Activated CD8-positive, alpha-beta T cell treated with anti-CD3 and anti-CD28 coated beads for 36 hours (primary cell): ENCODE measurements at regions of chr13 and their contacts with region 1.

Region 1: GRCh38 chr13:48233046-48233907 is at the start of gene ITM2B:
- DNase-seq: peak; percentile 60
- ATAC-seq: peak; percentile 69
- H3K4me3 Mint-ChIP-seq: peak within 1 kb of the TSS; percentile 88
- H3K27ac Mint-ChIP-seq: peak within 1 kb of the TSS; percentile 95
- H3K4me1 Mint-ChIP-seq: peaks cover 53% of the 10 kb centered on the region
- H3K27me3 Mint-ChIP-seq: no peaks in the 10 kb centered on the region
- CTCF ChIP-seq: peak; percentile 61
- total RNA-seq, gene ITM2B: 85.5 to 91.2 TPM

Region 2: DNA sequence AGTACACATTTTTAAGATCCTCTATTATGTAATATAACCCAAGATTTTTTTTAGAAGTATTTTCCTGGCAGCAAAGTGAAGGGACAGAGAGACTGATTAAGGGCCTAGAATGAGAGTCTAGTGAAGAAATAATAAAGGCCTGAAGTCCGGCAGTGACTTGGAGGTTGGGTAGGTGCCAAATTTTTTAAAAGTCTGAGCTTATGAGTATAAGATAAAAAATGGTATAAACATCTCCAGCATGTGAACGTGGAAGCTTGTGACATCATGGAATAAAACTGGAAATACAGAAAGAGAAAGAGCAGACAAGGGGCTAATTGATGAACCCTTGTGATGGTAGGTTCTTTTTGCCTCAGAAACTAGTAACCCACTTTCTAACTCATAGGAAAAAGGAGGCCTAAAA is 406.8 kb before region 1 on chr13:
- CTCF ChIA-PET with region 1: no interaction called
- POLR2A ChIA-PET with region 1: no interaction called
- intact Hi-C with region 1: no loop called
- DNase-seq: no peak
- ATAC-seq: no peak
- H3K4me3 Mint-ChIP-seq: no peak overlapping the region
- H3K27ac Mint-ChIP-seq: no peak overlapping the region
- H3K4me1 Mint-ChIP-seq: no peaks in the 10 kb centered on the region
- H3K27me3 Mint-ChIP-seq: no peaks in the 10 kb centered on the region
- CTCF ChIP-seq: no peak

Region 3: DNA sequence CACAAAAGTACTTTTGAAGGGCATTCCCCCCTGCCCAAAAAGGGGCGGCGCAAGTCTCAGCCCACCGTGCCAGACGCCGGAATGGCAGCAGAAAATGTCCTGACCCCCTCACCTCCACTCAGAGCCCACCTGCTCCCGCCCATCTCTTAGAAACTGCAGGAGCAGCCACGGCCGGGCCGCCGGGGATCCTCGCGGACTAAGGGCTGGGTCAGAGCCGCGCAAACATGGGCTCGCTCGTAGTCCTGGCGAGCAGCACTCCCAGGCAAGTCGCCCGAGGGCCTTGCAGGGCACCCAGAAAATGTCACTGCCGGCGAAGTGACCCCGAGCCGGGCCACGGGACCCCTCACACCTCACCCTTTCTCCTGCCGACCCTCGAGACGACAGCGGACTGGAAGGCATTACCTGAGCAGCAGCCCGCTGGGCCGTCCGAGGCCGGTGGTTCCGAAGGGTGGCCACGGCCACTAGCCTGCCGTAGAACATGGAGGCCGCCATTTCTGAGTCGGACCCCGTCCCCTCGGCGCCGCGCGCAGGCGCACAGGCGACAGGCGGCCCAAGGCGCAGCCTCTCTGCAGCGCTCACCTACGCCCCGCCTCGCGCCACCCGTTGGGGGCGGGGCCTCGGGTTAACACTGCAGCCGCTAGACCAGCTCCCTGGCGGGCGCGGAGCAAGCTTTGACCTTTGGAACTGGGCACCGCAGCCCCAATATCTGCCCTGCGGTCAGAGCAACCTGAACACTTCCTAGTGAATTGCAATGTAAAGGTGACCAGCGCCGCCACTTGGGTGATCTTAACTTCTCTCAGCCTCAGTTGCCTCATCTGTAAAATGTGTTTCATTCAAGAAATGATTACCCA is 232.3 kb before region 1 on chr13 and contains the start of gene SUCLA2:
- CTCF ChIA-PET with region 1: no interaction called
- POLR2A ChIA-PET with region 1: no interaction called
- intact Hi-C with region 1: no loop called
- DNase-seq: peak; percentile 92
- ATAC-seq: peak; percentile 100
- H3K4me3 Mint-ChIP-seq: peak within 1 kb of the TSS; percentile 90
- H3K27ac Mint-ChIP-seq: peak within 1 kb of the TSS; percentile 88
- H3K4me1 Mint-ChIP-seq: peaks cover 30% of the 10 kb centered on the region
- H3K27me3 Mint-ChIP-seq: no peaks in the 10 kb centered on the region
- CTCF ChIP-seq: no peak
- total RNA-seq, gene SUCLA2: 42.2 to 44.7 TPM

Region 4: DNA sequence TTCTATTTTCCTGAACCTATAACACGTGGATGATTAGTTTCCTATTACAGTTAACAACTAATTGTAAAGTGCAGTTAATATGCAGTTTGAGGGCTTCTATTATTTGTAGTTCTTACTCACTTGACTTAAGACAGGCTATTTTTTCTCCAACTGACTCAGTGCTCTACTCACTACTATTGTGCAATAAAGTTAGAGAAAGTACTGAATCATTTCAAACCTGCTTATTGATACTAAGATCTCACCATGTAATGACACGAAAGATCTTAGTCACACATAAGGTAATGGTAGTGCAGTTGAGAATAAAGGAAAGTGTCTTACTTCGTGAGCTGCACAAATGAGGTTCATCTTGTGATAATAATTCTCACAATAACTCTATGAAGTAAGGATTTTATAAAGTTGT is 23.1 kb before region 1 on chr13:
- CTCF ChIA-PET with region 1: no interaction called
- POLR2A ChIA-PET with region 1: no interaction called
- intact Hi-C with region 1: no loop called
- DNase-seq: no peak
- ATAC-seq: peak; percentile 92
- H3K4me3 Mint-ChIP-seq: no peak overlapping the region
- H3K27ac Mint-ChIP-seq: no peak overlapping the region
- H3K4me1 Mint-ChIP-seq: peaks cover 18% of the 10 kb centered on the region
- H3K27me3 Mint-ChIP-seq: no peaks in the 10 kb centered on the region
- CTCF ChIP-seq: no peak

Region 5: DNA sequence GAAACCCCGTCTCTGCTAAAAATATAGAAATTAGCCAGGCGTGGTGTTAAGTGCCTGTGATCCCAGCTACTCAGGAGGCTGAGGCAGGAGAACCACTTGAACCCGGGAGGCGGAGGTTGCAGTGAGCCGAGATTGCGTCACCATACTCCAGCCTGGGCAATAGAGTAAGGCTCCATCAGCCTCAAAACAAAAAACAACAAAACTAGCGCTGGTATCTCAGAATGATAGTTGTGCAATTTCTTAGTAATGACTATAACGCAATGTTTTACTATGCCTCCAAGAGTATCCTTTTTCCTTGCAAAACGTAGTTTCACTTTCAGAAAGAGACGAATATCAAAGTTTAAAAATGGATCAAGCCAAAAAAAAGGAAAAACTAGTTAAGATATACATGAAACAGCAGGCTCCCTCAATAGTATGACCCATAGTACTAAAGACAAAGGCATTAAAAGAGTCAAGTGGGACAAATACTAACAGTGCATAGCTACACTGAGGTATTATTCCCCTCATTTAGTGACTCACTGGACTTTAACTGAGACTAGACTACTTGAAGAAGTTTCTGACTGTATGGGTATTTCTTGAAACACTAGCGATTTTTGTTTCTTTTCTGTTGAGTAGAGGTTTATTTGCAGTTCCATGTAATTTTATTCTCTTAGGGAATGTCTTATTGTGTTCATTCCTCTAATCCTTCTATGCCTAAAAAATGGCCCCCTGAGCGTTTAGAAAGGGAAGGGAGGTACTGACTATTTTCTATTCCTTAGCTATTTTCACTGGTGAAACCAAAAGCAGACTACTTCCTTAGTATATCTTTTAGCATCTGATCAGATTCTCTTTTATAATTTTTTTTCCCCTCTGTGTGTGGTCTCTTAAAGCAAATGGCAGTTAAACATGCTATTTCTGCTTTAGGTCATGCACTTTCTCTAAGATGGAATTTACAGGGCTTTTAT is 10.6 kb before region 1 on chr13:
- CTCF ChIA-PET with region 1: interaction called, 18 read pairs
- POLR2A ChIA-PET with region 1: interaction called, 24 read pairs
- intact Hi-C with region 1: no loop called
- DNase-seq: no peak
- ATAC-seq: peak; percentile 67
- H3K4me3 Mint-ChIP-seq: peak overlapping the region; percentile 61
- H3K27ac Mint-ChIP-seq: peak overlapping the region; percentile 94
- H3K4me1 Mint-ChIP-seq: peaks cover 50% of the 10 kb centered on the region
- H3K27me3 Mint-ChIP-seq: no peaks in the 10 kb centered on the region
- CTCF ChIP-seq: no peak

Region 6: DNA sequence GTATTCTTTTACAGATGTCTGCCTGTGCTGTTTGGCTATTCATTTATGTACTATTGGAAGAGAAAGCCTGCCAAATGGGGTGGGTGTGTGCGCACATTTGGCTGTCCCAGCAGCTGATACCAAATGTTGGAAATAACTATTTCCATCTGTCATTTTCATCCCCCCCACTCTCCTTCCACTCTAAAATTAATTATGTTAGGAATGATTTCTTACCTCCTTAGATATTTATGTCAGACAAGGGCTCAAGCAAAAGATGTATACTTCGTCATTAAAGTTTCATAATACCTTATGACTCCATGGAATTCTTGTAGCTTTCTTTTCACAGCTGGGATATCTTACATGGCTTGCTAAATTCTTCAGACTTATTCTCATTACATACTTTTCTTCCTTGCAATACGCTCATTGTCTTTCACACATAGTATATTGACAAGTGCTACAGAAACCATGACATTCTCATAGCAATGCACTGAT is 18.4 kb after region 1 on chr13:
- CTCF ChIA-PET with region 1: interaction called, 9 read pairs
- POLR2A ChIA-PET with region 1: interaction called, 19 read pairs
- intact Hi-C with region 1: no loop called
- DNase-seq: no peak
- ATAC-seq: no peak
- H3K4me3 Mint-ChIP-seq: no peak overlapping the region
- H3K27ac Mint-ChIP-seq: no peak overlapping the region
- H3K4me1 Mint-ChIP-seq: peaks cover 60% of the 10 kb centered on the region
- H3K27me3 Mint-ChIP-seq: no peaks in the 10 kb centered on the region
- CTCF ChIP-seq: no peak

Region 7: GRCh38 chr13:48303359-48304142 is 70.3 kb after region 1 on chr13 and contains the start of gene RB1:
- CTCF ChIA-PET with region 1: no interaction called
- POLR2A ChIA-PET with region 1: interaction called, 4 read pairs
- intact Hi-C with region 1: loop called (anchors 5 kb)
- DNase-seq: peak; percentile 93
- ATAC-seq: peak; percentile 84
- H3K4me3 Mint-ChIP-seq: peak within 1 kb of the TSS; percentile 97
- H3K27ac Mint-ChIP-seq: peak within 1 kb of the TSS; percentile 99
- H3K4me1 Mint-ChIP-seq: peaks cover 32% of the 10 kb centered on the region
- H3K27me3 Mint-ChIP-seq: no peaks in the 10 kb centered on the region
- CTCF ChIP-seq: no peak
- total RNA-seq, gene RB1: 26.4 to 29.2 TPM

Region 8: GRCh38 chr13:48400850-48401291 is 167.6 kb after region 1 on chr13:
- CTCF ChIA-PET with region 1: no interaction called
- POLR2A ChIA-PET with region 1: no interaction called
- intact Hi-C with region 1: loop called (anchors 10 kb)
- DNase-seq: no peak
- ATAC-seq: peak; percentile 32
- H3K4me3 Mint-ChIP-seq: no peak overlapping the region
- H3K27ac Mint-ChIP-seq: peak overlapping the region; percentile 7
- H3K4me1 Mint-ChIP-seq: peaks cover 43% of the 10 kb centered on the region
- H3K27me3 Mint-ChIP-seq: no peaks in the 10 kb centered on the region
- CTCF ChIP-seq: no peak

Region 9: DNA sequence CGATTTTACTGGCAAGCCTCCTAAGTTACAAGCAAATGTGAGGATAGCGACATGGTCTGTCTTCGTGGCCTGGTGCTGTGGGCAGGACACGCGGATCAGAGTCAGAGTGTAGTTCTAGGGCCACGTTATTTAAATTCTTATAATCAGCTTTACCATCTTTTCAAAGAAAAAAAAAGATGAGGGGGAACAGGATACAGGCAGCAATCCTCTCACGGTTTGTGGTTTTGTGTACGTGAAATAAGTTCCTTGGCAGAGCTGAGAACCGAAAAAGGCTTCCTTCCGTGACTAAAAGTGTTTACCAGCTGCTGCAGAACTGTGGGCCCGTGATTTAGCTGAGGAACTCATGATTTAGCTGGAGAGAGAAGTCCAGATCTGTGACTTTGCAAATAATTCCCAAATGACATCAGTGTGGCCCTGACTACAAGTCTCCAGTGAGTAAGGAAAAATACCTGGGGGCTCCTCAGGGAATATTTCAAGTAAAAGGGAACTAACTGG is 272.4 kb after region 1 on chr13:
- CTCF ChIA-PET with region 1: no interaction called
- POLR2A ChIA-PET with region 1: no interaction called
- intact Hi-C with region 1: loop called (anchors 10 kb)
- DNase-seq: peak; percentile 68
- ATAC-seq: peak; percentile 76
- H3K4me3 Mint-ChIP-seq: peak overlapping the region; percentile 39
- H3K27ac Mint-ChIP-seq: peak overlapping the region; percentile 92
- H3K4me1 Mint-ChIP-seq: peaks cover 34% of the 10 kb centered on the region
- H3K27me3 Mint-ChIP-seq: no peaks in the 10 kb centered on the region
- CTCF ChIP-seq: no peak